CD4-positive, alpha-beta memory T cell (primary cell): ENCODE measurements at regions of chr6 and their contacts with region 1.

Region 1: DNA sequence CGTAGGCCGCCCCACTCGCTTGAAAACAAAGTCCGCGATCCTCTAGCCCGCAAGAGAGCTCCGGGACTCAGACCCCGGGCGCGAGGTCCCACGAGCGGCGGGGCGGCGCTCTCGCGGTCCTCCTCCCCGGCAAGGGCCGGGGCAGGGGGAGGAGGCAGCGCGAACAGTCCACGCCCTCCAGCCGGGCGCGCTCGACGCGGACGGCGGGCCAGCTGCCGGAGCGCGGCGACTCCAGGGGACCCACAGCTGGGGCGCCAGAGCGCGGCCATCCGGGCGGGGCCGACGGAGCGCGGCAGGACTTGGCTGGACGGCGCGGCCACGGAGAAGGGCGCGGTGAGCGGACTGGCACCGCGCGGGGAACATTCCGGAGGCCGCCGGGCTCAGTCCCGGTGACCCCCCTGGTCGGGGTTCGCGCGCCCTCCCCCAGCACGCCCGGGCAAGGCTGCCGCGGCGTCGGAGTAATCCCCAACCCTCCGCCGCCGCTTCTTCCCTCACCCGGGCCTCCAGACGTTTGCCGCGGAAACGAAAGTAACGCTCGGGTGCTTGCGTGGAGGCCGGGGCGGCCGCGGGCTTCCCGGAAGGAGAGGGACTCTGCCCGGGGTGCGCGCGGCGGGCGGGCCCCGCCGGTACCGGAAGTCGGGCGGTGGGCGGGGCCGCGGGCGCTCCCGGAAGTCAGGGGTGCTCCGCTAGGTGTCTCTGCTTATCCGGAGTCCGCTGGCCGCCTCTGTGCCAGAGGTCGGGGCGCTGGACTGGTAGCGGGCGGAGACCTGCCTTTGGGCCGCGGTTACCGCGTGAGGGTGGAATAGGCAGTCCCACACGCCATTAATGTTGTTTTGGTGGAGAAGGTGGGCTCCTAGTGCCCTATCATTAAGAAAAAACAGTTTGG is at the start of gene RIPK1:
- DNase-seq: peak; percentile 93 to 96 (median 94)
- H3K4me3 ChIP-seq: peak within 1 kb of the TSS; percentile 64 to 88
- H3K4me3 Mint-ChIP-seq: peak within 1 kb of the TSS; percentile 94 to 99 (median 96)
- H3K27ac ChIP-seq: peak within 1 kb of the TSS; percentile 98
- H3K27ac Mint-ChIP-seq: peak within 1 kb of the TSS; percentile 96 to 99 (median 98)
- H3K4me1 ChIP-seq: peaks cover 61% of the 10 kb centered on the region
- H3K4me1 Mint-ChIP-seq: peaks cover 40 to 85% (median 57%) of the 10 kb centered on the region in 4 donors
- H3K27me3 ChIP-seq: no peaks in the 10 kb centered on the region
- H3K27me3 Mint-ChIP-seq: no peaks in the 10 kb centered on the region
- total RNA-seq, gene RIPK1: 38.7 to 39.0 TPM

Region 2: DNA sequence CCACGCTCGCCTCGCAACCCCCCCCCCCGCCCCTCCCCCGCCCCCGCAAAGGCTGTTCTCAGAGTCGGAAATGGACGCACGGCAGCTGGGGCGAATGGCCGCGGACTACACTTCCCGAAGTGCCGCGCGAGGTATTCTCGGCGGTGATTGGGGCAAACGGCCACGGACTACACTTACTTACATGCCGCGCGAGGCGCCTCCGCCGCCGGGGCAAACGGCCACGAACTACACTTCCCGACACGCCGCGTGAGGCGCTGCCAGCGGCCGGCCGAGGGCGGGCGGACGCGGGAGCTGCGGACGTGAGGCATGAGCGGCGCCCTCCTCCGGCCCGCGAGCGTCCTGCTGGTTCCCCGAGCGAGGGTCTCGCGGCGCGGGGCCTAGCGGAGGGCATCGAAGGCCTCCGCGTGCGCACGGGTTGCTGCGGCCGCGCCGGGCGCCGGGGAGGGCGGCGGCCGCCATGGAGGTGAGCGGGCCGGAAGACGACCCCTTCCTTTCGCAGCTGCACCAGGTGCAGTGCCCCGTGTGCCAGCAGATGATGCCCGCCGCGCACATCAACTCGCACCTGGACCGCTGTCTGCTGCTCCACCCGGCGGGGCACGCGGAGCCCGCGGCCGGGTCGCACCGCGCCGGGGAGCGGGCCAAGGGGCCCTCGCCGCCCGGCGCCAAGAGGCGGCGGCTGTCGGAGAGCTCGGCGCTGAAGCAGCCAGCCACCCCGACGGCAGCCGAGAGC is 303.2 kb before region 1 on chr6 and contains the start of gene WRNIP1:
- CTCF ChIA-PET with region 1: no interaction called
- POLR2A ChIA-PET with region 1: interaction called, 17 read pairs
- intact Hi-C with region 1: loop called (anchors 1 kb)
- DNase-seq: peak; percentile 95 to 98 (median 98)
- H3K4me3 ChIP-seq: peak within 1 kb of the TSS; percentile 63 to 79
- H3K4me3 Mint-ChIP-seq: peak within 1 kb of the TSS; percentile 93 to 97 (median 95)
- H3K27ac ChIP-seq: peak within 1 kb of the TSS; percentile 90
- H3K27ac Mint-ChIP-seq: peak within 1 kb of the TSS; percentile 98 to 100 (median 99)
- H3K4me1 ChIP-seq: peaks cover 45% of the 10 kb centered on the region
- H3K4me1 Mint-ChIP-seq: peaks cover 33 to 63% (median 43%) of the 10 kb centered on the region in 4 donors
- H3K27me3 ChIP-seq: no peaks in the 10 kb centered on the region
- H3K27me3 Mint-ChIP-seq: peaks cover 0 to 1% of the 10 kb centered on the region in 2 donors
- total RNA-seq, gene WRNIP1: 41.1 to 42.7 TPM

Region 3: GRCh38 chr6:2848851-2849250 is 219.7 kb before region 1 on chr6:
- CTCF ChIA-PET with region 1: no interaction called
- POLR2A ChIA-PET with region 1: interaction called, 3 read pairs
- intact Hi-C with region 1: loop called (anchors 2 kb)
- DNase-seq: peak; percentile 61 to 89 (median 72)
- H3K4me3 ChIP-seq: peak overlapping the region in 1 of 2 donors; percentile 29
- H3K4me3 Mint-ChIP-seq: peak overlapping the region in 6 of 8 donors; percentile 40 to 80 (median 67)
- H3K27ac ChIP-seq: peak overlapping the region; percentile 5
- H3K27ac Mint-ChIP-seq: peak overlapping the region; percentile 66 to 96 (median 90)
- H3K4me1 ChIP-seq: peaks cover 43% of the 10 kb centered on the region
- H3K4me1 Mint-ChIP-seq: peaks cover 23 to 55% (median 42%) of the 10 kb centered on the region in 4 donors
- H3K27me3 ChIP-seq: no peaks in the 10 kb centered on the region
- H3K27me3 Mint-ChIP-seq: no peaks in the 10 kb centered on the region

Region 4: GRCh38 chr6:3023663-3024483 is 44.7 kb before region 1 on chr6:
- CTCF ChIA-PET with region 1: interaction called, 4 read pairs
- POLR2A ChIA-PET with region 1: interaction called, 17 read pairs
- intact Hi-C with region 1: no loop called
- DNase-seq: peak; percentile 73 to 91 (median 78)
- H3K4me3 ChIP-seq: peak overlapping the region; percentile 67 to 72
- H3K4me3 Mint-ChIP-seq: peak overlapping the region; percentile 87 to 97 (median 92)
- H3K27ac ChIP-seq: peak overlapping the region; percentile 61
- H3K27ac Mint-ChIP-seq: peak overlapping the region; percentile 91 to 97 (median 92)
- H3K4me1 ChIP-seq: peaks cover 70% of the 10 kb centered on the region
- H3K4me1 Mint-ChIP-seq: peaks cover 34 to 69% (median 54%) of the 10 kb centered on the region in 4 donors
- H3K27me3 ChIP-seq: no peaks in the 10 kb centered on the region
- H3K27me3 Mint-ChIP-seq: no peaks in the 10 kb centered on the region

Region 5: GRCh38 chr6:3118353-3119039 is 49.9 kb after region 1 on chr6 and contains the start of gene BPHL:
- CTCF ChIA-PET with region 1: interaction called, 6 read pairs
- POLR2A ChIA-PET with region 1: interaction called, 9 read pairs
- intact Hi-C with region 1: loop called (anchors 1 kb)
- DNase-seq: peak; percentile 98 to 100 (median 99)
- H3K4me3 ChIP-seq: peak within 1 kb of the TSS; percentile 76 to 94
- H3K4me3 Mint-ChIP-seq: peak within 1 kb of the TSS; percentile 75 to 96 (median 91)
- H3K27ac ChIP-seq: peak within 1 kb of the TSS; percentile 87
- H3K27ac Mint-ChIP-seq: peak within 1 kb of the TSS; percentile 93 to 97 (median 96)
- H3K4me1 ChIP-seq: peaks cover 14% of the 10 kb centered on the region
- H3K4me1 Mint-ChIP-seq: peaks cover 7 to 20% (median 14%) of the 10 kb centered on the region in 4 donors
- H3K27me3 ChIP-seq: no peaks in the 10 kb centered on the region
- H3K27me3 Mint-ChIP-seq: no peaks in the 10 kb centered on the region
- total RNA-seq, gene BPHL: 11.9 to 13.7 TPM

Region 6: GRCh38 chr6:3251462-3252314 is 183.1 kb after region 1 on chr6:
- CTCF ChIA-PET with region 1: interaction called, 5 read pairs
- POLR2A ChIA-PET with region 1: interaction called, 5 read pairs
- intact Hi-C with region 1: loop called (anchors 2 kb)
- DNase-seq: peak; percentile 73 to 79 (median 77)
- H3K4me3 ChIP-seq: no peak overlapping the region
- H3K4me3 Mint-ChIP-seq: peak overlapping the region in 5 of 8 donors; percentile 15 to 66 (median 61)
- H3K27ac ChIP-seq: no peak overlapping the region
- H3K27ac Mint-ChIP-seq: peak overlapping the region in 1 of 7 donors; percentile 1
- H3K4me1 ChIP-seq: peaks cover 9% of the 10 kb centered on the region
- H3K4me1 Mint-ChIP-seq: peaks cover 4 to 15% (median 6%) of the 10 kb centered on the region in 4 donors
- H3K27me3 ChIP-seq: no peaks in the 10 kb centered on the region
- H3K27me3 Mint-ChIP-seq: peaks cover 26 to 30% of the 10 kb centered on the region in 2 donors

Region 7: GRCh38 chr6:3356056-3356761 is 287.6 kb after region 1 on chr6:
- CTCF ChIA-PET with region 1: no interaction called
- POLR2A ChIA-PET with region 1: no interaction called
- intact Hi-C with region 1: loop called (anchors 5 kb)
- DNase-seq: peak; percentile 65 to 84 (median 78)
- H3K4me3 ChIP-seq: peak overlapping the region; percentile 14 to 59
- H3K4me3 Mint-ChIP-seq: peak overlapping the region; percentile 86 to 93 (median 88)
- H3K27ac ChIP-seq: peak overlapping the region; percentile 57
- H3K27ac Mint-ChIP-seq: peak overlapping the region; percentile 94 to 98 (median 97)
- H3K4me1 ChIP-seq: peaks cover 36% of the 10 kb centered on the region
- H3K4me1 Mint-ChIP-seq: peaks cover 33 to 58% (median 42%) of the 10 kb centered on the region in 4 donors
- H3K27me3 ChIP-seq: no peaks in the 10 kb centered on the region
- H3K27me3 Mint-ChIP-seq: peaks cover 1 to 4% of the 10 kb centered on the region in 2 donors